Mammary epithelial cell (primary cell): ENCODE measurements at regions of chr11 and their contacts with region 1.

Region 1: GRCh38 chr11:129785383-129786111 is 30.1 kb upstream of the TMEM45B start:
- DNase-seq: peak; percentile 31
- H3K4me3 ChIP-seq: no peak overlapping the region
- H3K27ac ChIP-seq: no peak overlapping the region
- H3K4me1 ChIP-seq: peaks cover 18% of the 10 kb centered on the region
- H3K27me3 ChIP-seq: no peaks in the 10 kb centered on the region
- CTCF ChIP-seq: peak; percentile 32 to 62

Region 2: GRCh38 chr11:129691142-129691541 is 94.4 kb before region 1 on chr11:
- CTCF ChIA-PET with region 1: no interaction called
- dilution Hi-C with region 1: no loop called
- in situ Hi-C with region 1: no loop called
- intact Hi-C with region 1: no loop called
- DNase-seq: no peak
- H3K4me3 ChIP-seq: no peak overlapping the region
- H3K27ac ChIP-seq: no peak overlapping the region
- H3K4me1 ChIP-seq: no peaks in the 10 kb centered on the region
- H3K27me3 ChIP-seq: peaks cover 2% of the 10 kb centered on the region
- CTCF ChIP-seq: no peak

Region 3: GRCh38 chr11:129750349-129751292 is 34.9 kb before region 1 on chr11:
- CTCF ChIA-PET with region 1: no interaction called
- dilution Hi-C with region 1: no loop called
- in situ Hi-C with region 1: no loop called
- intact Hi-C with region 1: no loop called
- DNase-seq: peak; percentile 55
- H3K4me3 ChIP-seq: peak overlapping the region in 1 of 3 experiments; percentile 34
- H3K27ac ChIP-seq: no peak overlapping the region
- H3K4me1 ChIP-seq: peaks cover 4% of the 10 kb centered on the region
- H3K27me3 ChIP-seq: peaks cover 18% of the 10 kb centered on the region
- CTCF ChIP-seq: peak; percentile 82 to 90

Region 4: GRCh38 chr11:129840236-129840635 is 54.7 kb after region 1 on chr11:
- CTCF ChIA-PET with region 1: no interaction called
- dilution Hi-C with region 1: no loop called
- in situ Hi-C with region 1: loop called in 1 of 2 experiments (anchors 5 kb)
- intact Hi-C with region 1: no loop called
- DNase-seq: no peak
- H3K4me3 ChIP-seq: no peak overlapping the region
- H3K27ac ChIP-seq: no peak overlapping the region
- H3K4me1 ChIP-seq: peaks cover 13% of the 10 kb centered on the region
- H3K27me3 ChIP-seq: no peaks in the 10 kb centered on the region
- CTCF ChIP-seq: no peak

Region 5: DNA sequence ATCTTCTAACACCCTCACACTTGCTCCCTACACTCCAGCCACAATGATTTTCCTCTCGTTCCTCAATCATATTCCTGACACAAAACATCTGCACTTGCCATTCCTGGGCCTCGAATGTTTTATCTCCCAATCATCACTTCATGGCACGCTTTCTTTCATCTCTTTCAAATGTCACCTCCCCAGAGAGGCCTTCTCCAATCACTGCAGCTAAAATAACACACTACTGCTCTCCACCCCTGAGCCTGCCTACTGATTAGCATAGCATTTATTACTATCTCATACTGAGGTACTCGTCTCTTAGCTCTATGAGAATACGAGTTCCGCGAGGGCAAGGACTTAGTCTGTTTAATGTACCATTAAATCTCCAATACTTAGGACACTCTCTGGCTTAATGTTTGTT is 86.4 kb after region 1 on chr11:
- CTCF ChIA-PET with region 1: no interaction called
- dilution Hi-C with region 1: no loop called
- in situ Hi-C with region 1: loop called (anchors 5 to 25 kb)
- intact Hi-C with region 1: loop called (anchors 2 kb)
- DNase-seq: no peak
- H3K4me3 ChIP-seq: no peak overlapping the region
- H3K27ac ChIP-seq: no peak overlapping the region
- H3K4me1 ChIP-seq: no peaks in the 10 kb centered on the region
- H3K27me3 ChIP-seq: no peaks in the 10 kb centered on the region
- CTCF ChIP-seq: no peak

Region 6: GRCh38 chr11:129922674-129923073 is 137.1 kb after region 1 on chr11:
- CTCF ChIA-PET with region 1: no interaction called
- dilution Hi-C with region 1: no loop called
- in situ Hi-C with region 1: no loop called
- intact Hi-C with region 1: loop called (anchors 1 kb)
- DNase-seq: no peak
- H3K4me3 ChIP-seq: no peak overlapping the region
- H3K27ac ChIP-seq: no peak overlapping the region
- H3K4me1 ChIP-seq: no peaks in the 10 kb centered on the region
- H3K27me3 ChIP-seq: no peaks in the 10 kb centered on the region
- CTCF ChIP-seq: no peak

Region 7: GRCh38 chr11:130145975-130146776 is 360.6 kb after region 1 on chr11:
- CTCF ChIA-PET with region 1: no interaction called
- dilution Hi-C with region 1: no loop called
- in situ Hi-C with region 1: loop called in 1 of 2 experiments (anchors 25 kb)
- intact Hi-C with region 1: loop called (anchors 5 kb)
- DNase-seq: peak; percentile 99
- H3K4me3 ChIP-seq: no peak overlapping the region
- H3K27ac ChIP-seq: peak overlapping the region; percentile 76
- H3K4me1 ChIP-seq: peaks cover 12% of the 10 kb centered on the region
- H3K27me3 ChIP-seq: no peaks in the 10 kb centered on the region
- CTCF ChIP-seq: peak; percentile 42 to 73